ENCODE measurements at regions of chr2 and their contacts with region 1.

Region 1: DNA sequence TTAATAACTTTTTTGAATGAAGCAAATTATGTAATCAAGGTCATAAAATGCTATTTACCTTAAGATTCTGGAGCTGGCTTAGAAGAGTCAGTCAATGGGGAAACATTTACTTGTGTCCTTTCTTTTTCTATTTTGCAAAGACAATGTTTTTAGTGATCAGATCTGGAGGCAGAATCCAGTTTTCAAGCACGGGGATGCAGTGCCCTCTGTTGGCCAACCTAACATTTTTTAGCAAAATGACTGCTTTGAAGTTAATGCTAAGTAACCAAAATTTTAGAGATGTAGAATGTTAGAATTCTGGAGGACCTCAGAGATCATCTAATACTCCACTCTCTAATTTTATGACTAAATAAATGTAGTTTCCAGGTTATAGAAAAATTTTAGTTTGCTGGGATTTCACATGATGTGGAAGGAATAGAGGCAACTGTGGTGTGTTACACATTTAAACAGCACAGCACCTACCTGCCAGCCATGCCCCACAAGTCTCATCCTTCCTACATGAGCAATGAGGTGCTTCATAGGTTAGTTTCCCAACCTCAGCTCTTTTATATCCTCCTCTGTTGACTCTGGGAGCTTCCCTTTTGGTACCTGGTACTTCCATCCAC is 23.6 kb upstream of the SLC9A4 start:
- DNase-seq: peak; percentile 47
- ATAC-seq: peak; percentile 75
- H3K4me3 ChIP-seq: no peak overlapping the region
- H3K27ac ChIP-seq: no peak overlapping the region
- H3K4me1 ChIP-seq: no peaks in the 10 kb centered on the region
- H3K27me3 ChIP-seq: peaks cover 12% of the 10 kb centered on the region
- CTCF ChIP-seq: peak; percentile 83
- POLR2A ChIP-seq: 0 out of 2 replicates have a peak, but pooled peaks have one; percentile 24
- RAD21 ChIP-seq: peak; percentile 85

Region 2: DNA sequence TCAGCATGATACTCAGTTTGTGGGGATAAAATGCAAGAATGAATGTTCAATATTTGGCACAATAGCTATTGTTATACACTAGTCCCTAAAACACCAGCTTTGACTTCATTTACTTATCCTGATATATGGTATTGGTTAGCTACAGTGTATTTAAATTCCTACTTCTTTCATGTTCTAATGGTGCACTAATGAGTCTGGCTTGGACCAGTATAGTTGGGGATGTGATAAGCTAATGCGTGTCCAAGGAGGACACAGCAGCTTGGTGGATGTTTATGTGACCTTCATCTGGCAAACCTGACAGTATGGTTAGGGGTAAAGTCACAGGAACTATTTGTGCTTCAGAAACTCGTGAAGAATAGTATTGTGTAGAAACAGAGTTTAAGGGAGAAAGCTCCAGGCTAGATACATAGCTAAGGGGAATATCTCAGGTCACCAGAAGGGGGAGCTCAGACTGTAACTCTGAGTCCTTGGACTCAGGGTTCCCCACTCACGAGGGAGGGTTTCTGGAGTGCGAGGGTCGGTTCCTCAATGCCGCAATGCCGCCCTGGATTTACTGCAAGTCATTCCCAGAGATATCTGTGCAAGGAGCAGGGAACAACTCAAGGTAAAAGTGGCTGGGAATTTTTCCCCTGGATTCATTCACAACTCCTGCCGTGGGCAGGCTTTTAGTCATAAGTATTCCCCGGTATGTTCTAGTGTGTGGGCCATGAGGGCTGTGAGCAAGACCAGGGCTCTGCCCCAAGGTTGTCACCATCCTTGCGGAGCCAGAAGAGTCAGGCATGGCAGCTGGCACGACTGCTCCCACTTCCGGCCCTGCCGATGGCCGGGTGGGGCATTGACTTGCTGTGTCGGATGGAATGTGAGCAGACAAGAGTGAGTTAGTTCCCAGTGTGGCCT is 443.2 kb before region 1 on chr2:
- CTCF ChIA-PET with region 1: no interaction called
- POLR2A ChIA-PET with region 1: no interaction called
- dilution Hi-C with region 1: no loop called
- in situ Hi-C with region 1: no loop called
- intact Hi-C with region 1: loop called (anchors 1 kb)
- DNase-seq: peak; percentile 56
- ATAC-seq: peak; percentile 97
- H3K4me3 ChIP-seq: no peak overlapping the region
- H3K27ac ChIP-seq: no peak overlapping the region
- H3K4me1 ChIP-seq: no peaks in the 10 kb centered on the region
- H3K27me3 ChIP-seq: peaks cover 5% of the 10 kb centered on the region; the same call in 1 of the 2 replicates
- CTCF ChIP-seq: peak; percentile 68
- POLR2A ChIP-seq: no peak
- RAD21 ChIP-seq: peak; percentile 73

Region 3: GRCh38 chr2:102187496-102188150 is 261.8 kb before region 1 on chr2:
- CTCF ChIA-PET with region 1: no interaction called
- POLR2A ChIA-PET with region 1: no interaction called
- dilution Hi-C with region 1: no loop called
- in situ Hi-C with region 1: no loop called
- intact Hi-C with region 1: loop called (anchors 5 kb)
- DNase-seq: peak; percentile 10
- ATAC-seq: peak; percentile 72
- H3K4me3 ChIP-seq: peak overlapping the region; percentile 17; the same call in 1 of the 2 replicates
- H3K27ac ChIP-seq: no peak overlapping the region
- H3K4me1 ChIP-seq: peaks cover 1% of the 10 kb centered on the region; the same call in 1 of the 2 replicates
- H3K27me3 ChIP-seq: no peaks in the 10 kb centered on the region
- CTCF ChIP-seq: no peak
- POLR2A ChIP-seq: no peak
- RAD21 ChIP-seq: no peak

Region 4: GRCh38 chr2:102585847-102586431 is 136.5 kb after region 1 on chr2:
- CTCF ChIA-PET with region 1: no interaction called
- POLR2A ChIA-PET with region 1: no interaction called
- dilution Hi-C with region 1: no loop called
- in situ Hi-C with region 1: no loop called
- intact Hi-C with region 1: no loop called
- DNase-seq: no peak
- ATAC-seq: no peak
- H3K4me3 ChIP-seq: no peak overlapping the region
- H3K27ac ChIP-seq: no peak overlapping the region
- H3K4me1 ChIP-seq: no peaks in the 10 kb centered on the region
- H3K27me3 ChIP-seq: peaks cover 2% of the 10 kb centered on the region; the same call in 1 of the 2 replicates
- CTCF ChIP-seq: no peak
- POLR2A ChIP-seq: no peak
- RAD21 ChIP-seq: no peak